ENCODE measurements at regions of chr5 and their contacts with region 1.

Region 1: DNA sequence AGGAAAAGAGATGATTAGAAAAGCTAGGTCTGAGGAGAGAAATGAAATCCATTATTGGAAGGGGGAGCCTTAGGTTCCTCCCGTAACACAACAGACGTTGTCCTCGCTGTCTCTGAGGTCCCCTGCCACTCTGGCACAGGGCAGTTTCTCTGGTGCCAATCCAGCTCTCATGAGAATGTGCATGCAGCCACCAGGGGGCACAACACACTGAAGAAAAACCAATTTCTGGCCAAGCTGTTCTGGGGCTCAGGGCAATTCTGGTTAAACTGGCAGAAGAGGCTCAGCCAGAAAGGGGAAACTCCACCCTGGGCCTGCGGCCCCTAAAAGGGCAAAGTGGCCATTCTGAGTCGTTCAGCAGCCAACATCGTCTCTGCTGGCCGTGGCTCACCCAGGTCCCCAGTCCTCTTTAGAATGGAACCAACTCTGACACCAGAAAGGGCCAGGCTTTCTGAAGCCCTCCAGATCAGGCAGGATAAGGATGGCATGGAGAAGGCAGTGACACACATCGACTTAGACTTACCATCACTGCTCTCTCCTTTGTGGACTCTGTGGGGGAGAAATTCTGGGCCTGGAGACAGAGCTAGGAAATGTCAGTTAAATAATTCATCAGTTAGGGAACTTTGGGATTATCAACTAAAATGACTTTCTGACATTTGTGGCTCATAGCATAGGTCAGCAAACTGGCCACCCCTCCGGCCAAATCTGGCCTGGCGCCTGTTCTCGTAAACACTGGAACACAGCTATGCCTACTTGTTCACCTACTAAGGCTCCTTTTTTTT is 58.5 kb upstream of the GOLPH3 start:
- DNase-seq: peak; percentile 83
- ATAC-seq: peak; percentile 93

Region 2: GRCh38 chr5:32312647-32313523 is 80.3 kb after region 1 on chr5 and contains the start of gene MTMR12:
- intact Hi-C with region 1: loop called (anchors 5 kb)
- DNase-seq: peak; percentile 100
- ATAC-seq: peak; percentile 98
- total RNA-seq, gene MTMR12: 14.6 TPM

Region 3: GRCh38 chr5:32329308-32329834 is 96.7 kb after region 1 on chr5:
- intact Hi-C with region 1: loop called (anchors 2 kb)
- DNase-seq: peak; percentile 66
- ATAC-seq: peak; percentile 93

Measured in Right ventricle myocardium superior (tissue), 1 donor.